ENCODE measurements at regions of chr6 and their contacts with region 1.

Region 1: GRCh38 chr6:35139908-35140655 is 1.1 kb downstream of the TCP11 start:
- DNase-seq: peak; percentile 67
- H3K4me3 Mint-ChIP-seq: no peak overlapping the region
- H3K27ac Mint-ChIP-seq: no peak overlapping the region
- H3K4me1 Mint-ChIP-seq: peaks cover 15% of the 10 kb centered on the region
- H3K27me3 Mint-ChIP-seq: peaks cover 13% of the 10 kb centered on the region

Region 2: DNA sequence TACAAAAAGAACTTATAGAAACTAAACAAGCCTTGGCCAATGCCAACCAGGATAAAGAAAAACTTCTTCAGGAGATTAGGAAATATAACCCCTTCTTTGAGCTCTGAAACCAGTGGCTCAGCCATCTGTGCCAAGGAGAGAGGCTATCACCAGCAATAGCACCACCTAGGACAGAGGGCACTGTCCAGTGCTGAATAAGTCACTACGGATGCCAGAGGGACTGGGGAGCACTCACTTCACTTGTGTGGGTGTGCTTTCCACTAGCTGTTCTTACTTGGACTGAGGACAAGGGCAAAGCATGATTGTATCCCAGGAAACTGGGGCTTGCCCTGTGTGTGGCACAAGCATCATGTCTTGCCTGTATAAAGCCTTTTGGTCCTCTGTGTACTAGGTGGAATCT is 267.8 kb before region 1 on chr6:
- CTCF ChIA-PET with region 1: no interaction called
- intact Hi-C with region 1: loop called (anchors 10 kb)
- DNase-seq: no peak
- H3K4me3 Mint-ChIP-seq: no peak overlapping the region
- H3K27ac Mint-ChIP-seq: no peak overlapping the region
- H3K4me1 Mint-ChIP-seq: no peaks in the 10 kb centered on the region
- H3K27me3 Mint-ChIP-seq: no peaks in the 10 kb centered on the region

Region 3: DNA sequence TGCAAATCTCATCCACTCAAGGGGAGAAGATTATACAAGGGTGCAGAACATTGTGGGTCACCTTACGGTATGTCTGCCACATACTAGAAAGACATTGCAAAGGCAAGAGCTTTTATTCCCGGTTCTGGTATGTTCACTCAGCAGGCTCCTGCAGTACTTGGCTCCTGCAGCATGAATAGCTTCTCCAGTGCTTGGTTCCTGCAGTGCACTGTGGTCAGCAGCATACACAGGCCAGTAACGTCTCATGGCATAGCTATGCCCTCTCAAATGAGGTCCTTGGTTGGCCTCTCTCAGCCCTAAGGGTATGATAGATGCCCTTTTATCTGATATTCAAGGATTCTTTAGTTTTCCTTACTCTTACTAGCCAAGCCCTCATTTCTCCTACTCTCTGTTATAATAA is 11.6 kb before region 1 on chr6:
- CTCF ChIA-PET with region 1: interaction called, 12 read pairs
- intact Hi-C with region 1: no loop called
- DNase-seq: no peak
- H3K4me3 Mint-ChIP-seq: no peak overlapping the region
- H3K27ac Mint-ChIP-seq: no peak overlapping the region
- H3K4me1 Mint-ChIP-seq: no peaks in the 10 kb centered on the region
- H3K27me3 Mint-ChIP-seq: peaks cover 2% of the 10 kb centered on the region

Measured in activated naive CD4-positive, alpha-beta T cell treated with anti-CD3 and anti-CD28 coated beads for 36 hours (primary cell).